A673 (cell line): ENCODE measurements at regions of chr19 and their contacts with region 1.

Region 1: DNA sequence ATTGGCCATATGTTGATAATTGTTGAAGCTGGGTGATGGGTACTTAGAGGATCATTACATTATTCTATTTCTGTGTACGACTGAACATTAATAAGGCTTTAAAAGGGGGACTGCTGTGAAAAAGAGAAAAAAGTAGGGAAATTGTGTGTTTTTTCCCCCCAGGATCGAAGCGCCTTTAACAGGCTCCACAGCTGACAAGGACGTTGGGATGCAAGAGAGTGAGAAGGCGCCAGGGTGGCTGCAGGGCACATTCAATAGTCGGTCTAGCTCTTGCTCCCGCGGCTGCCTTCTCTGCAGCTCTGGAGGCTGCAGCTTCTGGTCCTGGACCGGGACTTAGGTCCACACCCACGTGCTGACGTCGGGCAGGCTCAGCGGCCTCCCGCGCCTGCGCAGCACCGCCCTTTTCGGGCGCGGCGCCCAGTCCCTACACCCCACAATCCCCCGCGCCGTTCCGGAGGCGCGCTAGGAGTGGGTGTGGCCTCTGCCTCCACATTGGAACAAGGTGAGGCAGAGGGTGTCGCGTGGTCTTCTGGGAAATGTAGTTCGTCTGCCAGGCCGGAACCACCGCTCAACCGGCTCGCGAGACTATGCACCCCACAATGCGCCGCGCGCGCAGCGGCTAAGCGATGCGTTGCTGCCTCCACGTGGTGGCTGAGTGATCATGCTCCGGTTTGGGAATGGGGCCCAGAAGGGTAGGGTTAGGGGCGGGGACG is 4.9 kb upstream of the LRFN3 start:
- DNase-seq: peak; percentile 100
- H3K4me3 ChIP-seq: peak overlapping the region; percentile 35
- H3K27ac ChIP-seq: peak overlapping the region; percentile 43
- H3K4me1 ChIP-seq: peaks cover 7% of the 10 kb centered on the region
- H3K27me3 ChIP-seq: no peaks in the 10 kb centered on the region
- CTCF ChIP-seq: peak; percentile 96

Region 2: DNA sequence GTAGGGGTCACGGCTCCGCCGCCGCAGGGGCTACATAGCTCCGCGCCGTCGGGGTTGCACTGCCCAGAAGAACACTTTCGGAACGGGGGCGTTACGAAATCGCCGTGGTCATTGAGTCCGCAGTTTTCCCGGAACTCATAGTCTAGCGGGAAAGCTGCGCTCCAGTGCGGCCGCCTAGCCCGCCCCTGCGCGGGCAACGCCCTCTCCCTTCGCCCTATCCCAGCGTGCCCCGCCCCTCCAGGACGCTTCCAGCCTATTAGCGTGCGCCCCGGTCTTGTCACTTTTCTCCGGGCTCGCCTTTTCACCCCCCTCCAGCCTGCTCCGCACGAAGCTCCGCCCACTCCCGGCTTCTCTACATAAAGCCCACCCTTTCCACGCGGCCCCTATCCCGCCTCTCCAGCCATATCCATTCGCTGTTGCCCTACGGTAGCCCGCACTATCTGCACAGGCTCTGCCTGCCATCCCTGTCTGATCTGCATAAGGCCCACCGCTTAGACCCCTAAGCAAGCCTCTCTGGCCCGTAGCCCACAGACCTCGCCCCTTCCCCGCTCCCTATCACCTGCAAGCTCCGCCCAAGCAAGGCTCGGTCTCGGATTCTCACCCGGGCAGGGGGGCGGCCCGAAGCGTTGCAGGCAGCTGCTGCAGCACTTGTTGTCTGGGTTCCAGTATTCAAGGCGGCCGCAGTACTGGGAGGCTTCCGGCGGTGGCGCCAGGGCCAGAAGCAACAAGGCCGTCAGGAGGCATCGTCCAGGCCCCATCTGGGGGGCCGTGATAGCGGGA is 190.7 kb before region 1 on chr19:
- CTCF ChIA-PET with region 1: no interaction called
- POLR2A ChIA-PET with region 1: no interaction called
- intact Hi-C with region 1: loop called (anchors 10 kb)
- DNase-seq: peak; percentile 99
- H3K4me3 ChIP-seq: peak overlapping the region; percentile 65
- H3K27ac ChIP-seq: peak overlapping the region; percentile 77
- H3K4me1 ChIP-seq: peaks cover 3% of the 10 kb centered on the region
- H3K27me3 ChIP-seq: no peaks in the 10 kb centered on the region
- CTCF ChIP-seq: peak; percentile 38; the same call in 1 of the 2 replicates

Region 3: DNA sequence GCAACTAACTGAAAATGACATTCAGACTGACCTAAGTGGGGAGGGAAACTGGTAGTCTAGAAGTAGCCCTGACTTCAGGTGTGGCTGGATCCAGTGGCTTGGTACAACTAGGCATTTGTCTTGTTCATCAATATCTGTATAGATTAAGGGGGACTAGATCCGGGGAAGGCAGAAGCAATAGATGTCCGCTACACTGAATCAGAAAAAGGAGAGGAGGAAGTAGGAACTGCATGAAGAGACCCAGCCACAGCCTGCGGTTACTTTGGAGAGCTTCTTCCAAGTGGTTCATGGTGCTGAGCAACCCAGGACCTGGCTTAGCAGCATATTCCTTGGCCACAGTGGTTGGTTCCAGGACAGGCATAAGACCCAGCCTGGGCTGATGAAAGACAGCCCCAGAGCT is 108.7 kb before region 1 on chr19:
- CTCF ChIA-PET with region 1: interaction called, 15 read pairs
- POLR2A ChIA-PET with region 1: no interaction called
- intact Hi-C with region 1: no loop called
- DNase-seq: no peak
- H3K4me3 ChIP-seq: no peak overlapping the region
- H3K27ac ChIP-seq: no peak overlapping the region
- H3K4me1 ChIP-seq: no peaks in the 10 kb centered on the region
- H3K27me3 ChIP-seq: peaks cover 23% of the 10 kb centered on the region
- CTCF ChIP-seq: no peak

Region 4: GRCh38 chr19:35869327-35870123 is 61.8 kb before region 1 on chr19:
- CTCF ChIA-PET with region 1: no interaction called
- POLR2A ChIA-PET with region 1: interaction called, 10 read pairs
- intact Hi-C with region 1: no loop called
- DNase-seq: peak; percentile 97
- H3K4me3 ChIP-seq: peak overlapping the region; percentile 52
- H3K27ac ChIP-seq: peak overlapping the region; percentile 6
- H3K4me1 ChIP-seq: peaks cover 11% of the 10 kb centered on the region
- H3K27me3 ChIP-seq: no peaks in the 10 kb centered on the region
- CTCF ChIP-seq: no peak

Region 5: DNA sequence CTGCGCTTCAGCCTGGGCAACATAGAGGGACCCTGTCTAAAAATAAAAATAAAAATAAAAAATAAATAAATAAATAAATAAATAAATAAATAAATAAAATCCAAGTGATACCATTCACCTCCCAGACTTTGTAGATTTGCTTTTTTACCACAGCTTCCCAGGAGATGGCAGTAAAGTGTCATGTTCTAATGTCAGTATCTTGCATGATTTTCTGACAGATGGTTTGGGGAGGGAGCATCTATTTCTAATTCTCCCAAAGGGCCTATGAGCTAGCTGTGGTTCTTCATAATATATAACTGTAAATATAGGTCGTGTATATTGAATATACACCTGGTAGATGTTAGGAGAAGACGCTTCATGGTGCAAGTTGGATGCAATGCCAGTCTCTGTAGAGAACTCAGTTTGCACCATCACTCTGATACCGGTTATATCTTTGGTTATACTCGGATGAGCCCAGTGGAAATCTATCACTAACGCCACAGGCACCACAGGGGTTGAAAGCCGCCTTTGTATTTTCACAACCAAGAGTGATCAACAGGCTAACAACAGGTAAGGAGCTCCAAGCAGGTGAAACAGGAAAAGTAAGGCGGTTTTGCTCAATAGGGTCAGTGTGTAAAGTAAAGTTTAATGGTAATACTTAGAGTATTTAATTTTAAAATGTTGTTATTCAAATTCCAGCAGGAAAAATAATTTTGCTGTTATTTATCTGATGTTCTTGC is 49.0 kb before region 1 on chr19:
- CTCF ChIA-PET with region 1: interaction called, 8 read pairs
- POLR2A ChIA-PET with region 1: no interaction called
- intact Hi-C with region 1: loop called (anchors 1 kb)
- DNase-seq: peak; percentile 82
- H3K4me3 ChIP-seq: no peak overlapping the region
- H3K27ac ChIP-seq: no peak overlapping the region
- H3K4me1 ChIP-seq: no peaks in the 10 kb centered on the region
- H3K27me3 ChIP-seq: no peaks in the 10 kb centered on the region
- CTCF ChIP-seq: peak; percentile 57

Region 6: DNA sequence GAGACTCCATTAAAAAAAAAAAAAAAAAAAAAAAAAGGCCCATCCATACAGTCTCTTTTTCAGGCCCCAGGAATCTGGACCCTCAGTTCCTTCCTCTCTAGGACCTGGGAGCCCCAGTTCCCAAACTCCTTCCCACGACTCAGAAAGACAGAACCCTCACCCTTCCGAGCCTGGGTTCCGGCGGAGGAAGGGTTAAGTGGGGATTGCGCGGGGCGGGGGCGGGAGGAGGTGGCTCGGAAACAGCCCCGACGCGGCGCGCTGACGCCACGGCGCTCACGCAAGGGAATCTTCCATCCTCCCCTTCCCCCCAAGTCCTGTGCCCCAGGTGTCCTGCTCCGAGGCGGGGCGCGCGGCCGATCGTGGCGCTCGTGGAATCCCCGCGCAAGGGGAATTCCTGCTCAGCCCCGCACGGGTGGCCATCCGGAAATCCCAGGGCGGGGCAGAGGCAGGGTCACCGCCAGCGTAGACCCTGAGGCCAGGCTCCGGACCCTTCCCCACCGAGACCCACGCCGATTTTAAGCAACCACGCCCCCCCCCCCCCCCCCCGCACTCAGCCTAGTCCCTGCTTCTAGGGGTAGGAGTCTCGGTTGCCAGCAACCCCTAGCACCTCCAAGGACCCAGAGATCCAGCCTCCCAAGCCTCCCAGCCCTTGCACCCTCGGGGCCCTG is 31.6 kb before region 1 on chr19:
- CTCF ChIA-PET with region 1: no interaction called
- POLR2A ChIA-PET with region 1: no interaction called
- intact Hi-C with region 1: loop called (anchors 1 kb)
- DNase-seq: peak; percentile 94
- H3K4me3 ChIP-seq: peak overlapping the region; percentile 73
- H3K27ac ChIP-seq: peak overlapping the region; percentile 80
- H3K4me1 ChIP-seq: peaks cover 42% of the 10 kb centered on the region
- H3K27me3 ChIP-seq: no peaks in the 10 kb centered on the region
- CTCF ChIP-seq: no peak